ENCODE measurements at regions of chr13 and their contacts with region 1.

Region 1: GRCh38 chr13:59658027-59658737 is 505.5 kb downstream of the DIAPH3 start:
- DNase-seq: no peak
- ATAC-seq: no peak
- H3K4me3 ChIP-seq: no peak overlapping the region
- H3K27ac ChIP-seq: no peak overlapping the region
- H3K4me1 ChIP-seq: no peaks in the 10 kb centered on the region
- H3K27me3 ChIP-seq: no peaks in the 10 kb centered on the region
- CTCF ChIP-seq: no peak
- EP300 ChIP-seq: no peak
- POLR2A ChIP-seq: no peak
- RAD21 ChIP-seq: no peak

Region 2: DNA sequence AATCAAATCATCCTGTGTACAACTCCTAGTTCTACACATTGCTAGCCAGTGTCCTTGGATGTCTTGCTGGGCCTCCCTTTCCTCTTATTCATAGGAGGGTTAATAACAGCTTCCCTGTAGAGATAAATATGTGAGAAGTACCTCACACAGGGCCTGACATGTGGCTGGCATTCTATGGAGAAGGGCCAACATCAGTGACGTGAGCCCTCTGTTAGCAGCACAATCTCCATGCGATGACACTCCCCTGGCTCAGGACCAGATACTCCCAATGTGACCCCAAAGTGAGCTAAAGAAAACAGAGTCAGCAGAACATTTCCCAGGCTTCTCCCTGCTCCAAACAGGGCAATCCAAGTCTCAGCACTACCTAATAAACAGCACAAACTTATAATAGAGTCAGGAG is 312.9 kb before region 1 on chr13:
- CTCF ChIA-PET with region 1: no interaction called
- POLR2A ChIA-PET with region 1: no interaction called
- RAD21 ChIA-PET with region 1: no interaction called
- SMC1A ChIA-PET with region 1: no interaction called
- in situ Hi-C with region 1: no loop called
- intact Hi-C with region 1: no loop called
- DNase-seq: no peak
- ATAC-seq: no peak
- H3K4me3 ChIP-seq: no peak overlapping the region
- H3K27ac ChIP-seq: no peak overlapping the region
- H3K4me1 ChIP-seq: no peaks in the 10 kb centered on the region
- H3K27me3 ChIP-seq: no peaks in the 10 kb centered on the region
- CTCF ChIP-seq: no peak
- EP300 ChIP-seq: no peak
- POLR2A ChIP-seq: no peak
- RAD21 ChIP-seq: no peak

Region 3: DNA sequence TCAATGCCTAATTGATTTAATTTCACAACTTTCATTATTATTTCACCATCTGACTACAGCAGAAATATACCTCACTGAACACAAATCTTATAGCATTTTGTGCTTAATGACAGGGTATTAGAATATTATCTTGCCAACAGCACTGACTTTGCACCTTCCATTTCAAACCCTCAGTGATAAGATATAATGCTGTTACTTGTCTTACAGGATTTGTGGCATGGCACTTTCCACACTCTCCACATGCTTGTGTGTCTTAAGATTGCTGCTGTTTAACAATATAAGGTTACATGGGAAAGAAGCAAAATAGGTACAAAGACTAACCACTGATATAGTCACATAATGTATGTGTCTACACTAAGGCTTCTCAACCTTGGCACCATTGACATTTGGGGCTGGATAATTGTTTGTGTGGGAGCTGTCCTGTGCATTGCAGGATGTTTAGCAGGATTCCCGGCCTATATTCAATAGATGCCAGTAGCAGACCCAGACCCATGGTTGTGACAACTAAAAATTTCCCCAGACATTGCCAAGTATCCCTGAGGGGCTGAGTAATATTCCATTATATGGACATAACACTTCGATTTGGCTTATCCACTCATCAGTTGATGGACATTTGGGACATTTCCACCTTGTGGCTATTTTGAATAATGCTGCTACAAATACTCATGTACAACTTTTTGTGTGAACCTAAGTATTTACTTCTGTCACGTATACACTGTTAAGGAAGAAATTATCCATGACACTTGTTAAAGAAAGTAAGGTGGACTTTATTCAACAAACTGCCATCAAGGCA is 511.3 kb after region 1 on chr13:
- CTCF ChIA-PET with region 1: no interaction called
- POLR2A ChIA-PET with region 1: no interaction called
- RAD21 ChIA-PET with region 1: no interaction called
- SMC1A ChIA-PET with region 1: no interaction called
- in situ Hi-C with region 1: no loop called
- intact Hi-C with region 1: loop called (anchors 10 kb)
- DNase-seq: no peak
- ATAC-seq: no peak
- H3K4me3 ChIP-seq: no peak overlapping the region
- H3K27ac ChIP-seq: no peak overlapping the region
- H3K4me1 ChIP-seq: no peaks in the 10 kb centered on the region
- H3K27me3 ChIP-seq: no peaks in the 10 kb centered on the region
- CTCF ChIP-seq: no peak
- EP300 ChIP-seq: no peak
- POLR2A ChIP-seq: no peak
- RAD21 ChIP-seq: no peak

Measured in GM12878 (cell line).